ENCODE measurements at regions of chr1 and their contacts with region 1.

Region 1: DNA sequence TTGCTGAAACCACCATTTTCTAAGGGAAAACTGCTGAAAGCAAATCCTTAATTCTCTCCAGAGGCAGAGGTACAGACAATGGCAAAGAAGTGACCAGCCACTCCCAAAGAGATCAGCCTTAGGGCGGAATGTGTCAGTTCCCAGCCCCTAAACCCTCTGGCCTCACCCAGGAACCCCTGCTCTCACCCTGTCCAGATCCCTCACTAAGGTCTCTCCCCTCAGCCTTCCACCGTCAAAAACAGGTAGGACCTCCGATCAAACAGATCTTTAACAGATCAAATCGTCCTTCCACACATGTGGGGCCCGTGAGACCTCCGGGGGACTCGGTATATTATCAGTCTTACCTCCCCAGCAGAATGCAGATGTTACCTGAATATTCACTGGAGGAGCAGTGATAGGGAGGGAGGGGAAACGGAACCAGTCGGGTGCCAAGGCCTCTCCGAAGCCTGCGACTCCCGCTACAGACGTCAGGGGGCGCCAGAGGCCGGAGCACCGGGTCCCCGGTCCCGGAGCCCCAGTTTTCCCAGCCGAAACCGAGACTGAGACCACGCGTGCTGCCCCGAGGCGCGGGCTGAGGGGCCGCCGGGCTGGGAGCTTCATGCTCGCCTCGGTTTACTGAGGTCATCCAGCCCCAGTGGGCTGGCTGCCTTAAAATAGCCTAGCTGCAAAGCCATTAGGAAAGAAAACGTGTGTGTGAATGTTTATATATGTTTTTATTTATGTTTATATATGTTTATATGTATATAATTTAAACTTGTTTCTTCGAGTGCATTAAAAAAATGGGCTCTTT is 23.6 kb downstream of the GPA33 start:
- DNase-seq: peak; percentile 89
- ATAC-seq: peak; percentile 83

Region 2: DNA sequence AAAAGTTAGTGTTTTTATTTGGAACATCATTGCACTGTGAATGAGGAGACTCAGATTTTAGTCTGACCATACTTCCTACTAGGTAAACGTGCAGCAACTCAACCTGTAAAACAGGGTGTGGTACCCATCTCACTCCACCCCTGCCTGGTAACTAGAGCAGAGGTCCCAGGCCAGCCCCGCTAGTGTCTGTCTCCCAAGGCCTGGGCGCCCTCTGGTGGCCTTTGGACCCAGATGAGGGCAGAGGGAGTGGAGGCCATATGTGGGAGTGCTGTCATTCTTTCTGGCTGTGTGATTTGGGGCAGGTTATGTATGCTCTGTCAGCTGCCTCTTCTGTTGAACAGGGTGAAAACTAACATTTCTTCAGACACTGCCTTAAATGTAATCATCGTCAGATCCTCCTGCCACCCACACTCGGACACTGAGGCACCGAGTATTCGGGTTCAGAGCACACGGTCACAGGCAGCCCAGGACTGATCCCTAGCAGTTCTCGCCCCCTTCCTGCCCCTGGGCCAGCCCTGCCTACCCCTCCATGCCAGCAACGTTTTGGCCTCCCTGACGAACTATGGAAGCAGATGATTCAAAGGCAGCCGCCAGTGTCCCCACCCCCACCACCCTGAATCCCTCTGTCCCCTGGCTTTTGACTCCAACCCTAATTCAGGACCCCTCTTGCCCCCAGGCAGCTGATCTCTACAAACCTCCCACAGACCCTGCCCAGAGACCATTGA is 375.8 kb after region 1 on chr1:
- intact Hi-C with region 1: loop called (anchors 5 kb)
- DNase-seq: peak; percentile 90
- ATAC-seq: peak; percentile 91

Region 3: GRCh38 chr1:167533851-167534300 is 467.3 kb after region 1 on chr1:
- intact Hi-C with region 1: loop called (anchors 10 kb)
- DNase-seq: peak; percentile 78
- ATAC-seq: peak; percentile 88

Region 4: DNA sequence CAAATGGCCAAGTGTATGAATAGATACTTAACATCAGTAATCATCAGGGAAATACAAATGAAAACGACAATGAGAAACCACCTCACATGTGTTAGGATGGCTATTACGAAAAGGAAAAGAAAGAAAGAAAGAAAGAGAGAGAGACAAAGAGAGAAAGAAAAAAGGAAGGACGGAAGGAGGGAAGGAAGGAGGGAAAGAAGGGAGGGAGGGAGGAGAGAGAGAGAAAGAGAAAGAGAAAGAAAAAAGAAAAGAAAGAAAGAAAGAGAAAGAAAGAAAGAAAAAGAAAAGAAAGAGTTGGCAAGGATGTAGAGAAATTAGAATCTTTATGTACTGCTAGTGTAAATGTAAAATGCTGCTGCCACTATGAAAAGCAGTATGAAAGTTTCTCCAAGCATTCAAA is 1753.1 kb after region 1 on chr1:
- intact Hi-C with region 1: loop called (anchors 5 kb)
- DNase-seq: no peak
- ATAC-seq: no peak

Measured in sciatic nerve (tissue), 2 donors.